Calu3 (cell line): ENCODE measurements at regions of chr17 and their contacts with region 1.

Region 1: DNA sequence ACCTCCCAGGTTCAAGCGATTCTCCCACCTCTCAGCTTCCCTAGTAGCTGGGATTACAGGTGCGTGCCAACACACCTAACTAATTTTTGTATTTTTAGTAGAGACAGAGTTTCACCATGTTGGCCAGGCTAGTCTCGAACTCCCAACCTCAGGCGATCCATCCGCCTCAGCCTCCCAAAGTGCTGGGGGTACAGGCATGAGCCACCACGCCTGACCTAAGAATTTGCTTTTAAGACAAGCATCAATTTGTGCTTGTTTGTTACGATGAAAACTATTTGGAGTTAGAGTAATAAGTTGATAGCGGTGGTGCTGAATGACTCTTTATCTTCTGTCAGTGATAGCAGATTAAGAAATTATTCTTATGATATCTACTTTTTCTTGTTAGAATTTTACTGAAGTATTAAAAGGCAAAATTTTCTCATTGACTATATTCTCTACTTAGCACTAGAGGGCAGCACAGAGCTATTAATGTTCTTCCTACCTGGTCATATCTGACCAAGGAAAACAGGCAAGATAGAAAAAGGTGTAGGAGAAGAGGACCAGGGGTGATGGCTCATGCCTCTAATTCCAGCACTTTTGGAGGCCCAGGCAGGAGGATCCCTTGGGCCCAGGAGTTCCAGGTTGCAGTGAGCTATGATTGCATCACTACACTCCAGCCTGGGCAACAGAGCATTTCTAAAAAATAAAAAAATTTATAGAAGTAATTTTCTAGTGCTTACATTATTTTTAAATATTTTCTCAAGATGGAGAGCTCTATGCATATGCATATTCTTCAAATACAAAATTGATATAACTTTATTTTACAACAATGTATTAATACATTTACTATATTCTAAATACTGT is 24.5 kb downstream of the STXBP4 start:
- DNase-seq: peak; percentile 10
- H3K4me3 Mint-ChIP-seq: no peak overlapping the region
- H3K27ac Mint-ChIP-seq: no peak overlapping the region
- H3K4me1 Mint-ChIP-seq: no peaks in the 10 kb centered on the region
- H3K27me3 Mint-ChIP-seq: no peaks in the 10 kb centered on the region
- CTCF ChIP-seq: peak; percentile 23

Region 2: GRCh38 chr17:54754560-54754959 is 238.5 kb before region 1 on chr17:
- CTCF ChIA-PET with region 1: no interaction called
- intact Hi-C with region 1: no loop called
- DNase-seq: no peak
- H3K4me3 Mint-ChIP-seq: no peak overlapping the region
- H3K27ac Mint-ChIP-seq: no peak overlapping the region
- H3K4me1 Mint-ChIP-seq: no peaks in the 10 kb centered on the region
- H3K27me3 Mint-ChIP-seq: no peaks in the 10 kb centered on the region
- CTCF ChIP-seq: no peak

Region 3: GRCh38 chr17:54784305-54784704 is 208.7 kb before region 1 on chr17:
- CTCF ChIA-PET with region 1: no interaction called
- intact Hi-C with region 1: no loop called
- DNase-seq: no peak
- H3K4me3 Mint-ChIP-seq: no peak overlapping the region
- H3K27ac Mint-ChIP-seq: no peak overlapping the region
- H3K4me1 Mint-ChIP-seq: no peaks in the 10 kb centered on the region
- H3K27me3 Mint-ChIP-seq: no peaks in the 10 kb centered on the region
- CTCF ChIP-seq: no peak

Region 4: GRCh38 chr17:55005520-55005919 is 12.5 kb after region 1 on chr17:
- CTCF ChIA-PET with region 1: interaction called, 15 read pairs
- intact Hi-C with region 1: no loop called
- DNase-seq: no peak
- H3K4me3 Mint-ChIP-seq: no peak overlapping the region
- H3K27ac Mint-ChIP-seq: no peak overlapping the region
- H3K4me1 Mint-ChIP-seq: no peaks in the 10 kb centered on the region
- H3K27me3 Mint-ChIP-seq: no peaks in the 10 kb centered on the region
- CTCF ChIP-seq: peak; percentile 51

Region 5: GRCh38 chr17:55023626-55024025 is 30.6 kb after region 1 on chr17:
- CTCF ChIA-PET with region 1: no interaction called
- intact Hi-C with region 1: no loop called
- DNase-seq: no peak
- H3K4me3 Mint-ChIP-seq: no peak overlapping the region
- H3K27ac Mint-ChIP-seq: no peak overlapping the region
- H3K4me1 Mint-ChIP-seq: no peaks in the 10 kb centered on the region
- H3K27me3 Mint-ChIP-seq: no peaks in the 10 kb centered on the region
- CTCF ChIP-seq: no peak

Region 6: GRCh38 chr17:55295411-55296170 is 302.6 kb after region 1 on chr17:
- CTCF ChIA-PET with region 1: interaction called, 3 read pairs
- intact Hi-C with region 1: loop called (anchors 2 kb)
- DNase-seq: peak; percentile 66
- H3K4me3 Mint-ChIP-seq: no peak overlapping the region
- H3K27ac Mint-ChIP-seq: no peak overlapping the region
- H3K4me1 Mint-ChIP-seq: peaks cover 14% of the 10 kb centered on the region
- H3K27me3 Mint-ChIP-seq: no peaks in the 10 kb centered on the region
- CTCF ChIP-seq: peak; percentile 64

Region 7: DNA sequence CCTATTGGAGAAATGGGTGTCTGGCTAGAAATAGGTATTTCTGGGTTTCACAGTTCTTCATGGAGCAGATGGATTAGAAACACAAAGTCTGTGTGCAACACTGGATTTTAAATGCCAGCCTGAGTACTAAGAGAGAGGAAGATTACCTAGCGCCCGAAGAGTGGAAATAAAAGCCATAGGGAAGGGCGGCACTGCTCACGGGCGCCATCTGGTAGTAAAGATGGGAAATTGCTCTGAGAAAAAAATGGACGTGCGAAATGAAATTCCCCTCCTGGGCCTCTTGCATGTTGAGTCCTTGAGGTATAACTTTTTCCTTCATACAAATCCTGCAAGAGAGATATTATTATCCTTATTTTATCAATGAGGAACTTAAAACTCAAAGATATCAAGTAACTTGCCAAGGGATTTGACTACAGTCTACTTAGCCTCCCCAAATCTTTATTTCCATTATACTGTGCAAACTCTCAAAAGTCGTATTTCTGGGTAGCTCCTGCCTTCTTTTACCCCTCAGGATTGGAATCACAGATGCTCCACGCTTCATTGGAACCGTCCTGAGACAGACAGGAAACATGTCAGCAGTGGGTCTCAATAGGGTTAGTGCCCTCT is 355.8 kb after region 1 on chr17:
- CTCF ChIA-PET with region 1: interaction called, 5 read pairs
- intact Hi-C with region 1: loop called (anchors 1 kb)
- DNase-seq: peak; percentile 31
- H3K4me3 Mint-ChIP-seq: no peak overlapping the region
- H3K27ac Mint-ChIP-seq: no peak overlapping the region
- H3K4me1 Mint-ChIP-seq: peaks cover 7% of the 10 kb centered on the region
- H3K27me3 Mint-ChIP-seq: no peaks in the 10 kb centered on the region
- CTCF ChIP-seq: peak; percentile 48